ENCODE measurements at regions of chr16 and their contacts with region 1.

Region 1: GRCh38 chr16:77211880-77212740 is 12.9 kb downstream of the SYCE1L start:
- DNase-seq: peak; percentile 48 to 84 (median 79)
- ATAC-seq: peak; percentile 81 to 83
- H3K4me3 Mint-ChIP-seq: peak overlapping the region; percentile 81 to 95 (median 90)
- H3K27ac Mint-ChIP-seq: peak overlapping the region; percentile 24 to 92 (median 82)
- H3K4me1 Mint-ChIP-seq: peaks cover 12 to 18% (median 17%) of the 10 kb centered on the region in 4 donors
- H3K27me3 Mint-ChIP-seq: no peaks in the 10 kb centered on the region

Region 2: GRCh38 chr16:77190478-77191258 is 21.4 kb before region 1 on chr16 and contains the start of gene MON1B:
- POLR2A ChIA-PET with region 1: interaction called, 16 read pairs
- DNase-seq: peak; percentile 84 to 98 (median 96)
- ATAC-seq: peak; percentile 91 to 95
- H3K4me3 Mint-ChIP-seq: peak within 1 kb of the TSS; percentile 94 to 99 (median 98)
- H3K27ac Mint-ChIP-seq: peak within 1 kb of the TSS; percentile 99 to 100 (median 99)
- H3K4me1 Mint-ChIP-seq: peaks cover 37 to 55% (median 48%) of the 10 kb centered on the region in 4 donors
- H3K27me3 Mint-ChIP-seq: peaks cover 0 to 5% (median 0%) of the 10 kb centered on the region in 5 donors
- polyA plus RNA-seq, gene MON1B: 29.0 to 40.7 (median 33.0) TPM

Measured in naive thymus-derived CD8-positive, alpha-beta T cell (primary cell).